Natural killer cell (primary cell): ENCODE measurements at regions of chr5 and their contacts with region 1.

Region 1: DNA sequence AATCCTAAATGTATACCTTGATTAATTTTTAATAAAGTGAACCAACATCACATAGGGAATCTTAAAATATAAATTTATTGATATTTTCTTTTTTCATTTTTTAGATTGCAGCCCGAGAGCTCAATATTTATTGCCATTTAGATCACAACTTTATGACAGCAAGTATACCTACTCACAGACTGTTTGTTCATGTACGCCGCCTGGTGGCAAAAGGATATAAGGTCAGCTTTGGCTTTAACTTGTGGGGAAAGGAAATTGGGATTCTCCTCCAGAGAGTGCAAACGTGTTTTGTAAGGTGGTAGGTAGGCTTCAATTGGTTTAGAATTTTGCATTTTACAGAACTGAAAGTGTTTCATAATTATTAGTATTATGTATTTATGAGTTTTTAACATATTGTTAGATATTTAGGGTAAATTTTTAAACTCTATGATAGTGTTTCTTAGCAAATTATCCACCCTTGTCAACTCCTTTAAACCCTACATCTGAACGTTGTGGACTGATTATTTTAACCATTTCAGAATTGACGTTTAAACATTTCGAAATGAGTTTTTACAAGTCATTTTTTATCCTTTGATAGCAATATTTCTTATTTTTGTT is 17.5 kb upstream of the DHFR start:
- DNase-seq: peak; percentile 51 to 80
- ATAC-seq: peak; percentile 71 to 90 (median 84)
- H3K4me3 ChIP-seq: no peak overlapping the region
- H3K4me3 Mint-ChIP-seq: no peak overlapping the region
- H3K27ac ChIP-seq: no peak overlapping the region
- H3K27ac Mint-ChIP-seq: no peak overlapping the region
- H3K4me1 ChIP-seq: peaks cover 3% of the 10 kb centered on the region
- H3K4me1 Mint-ChIP-seq: no peaks in the 10 kb centered on the region
- H3K27me3 ChIP-seq: no peaks in the 10 kb centered on the region
- H3K27me3 Mint-ChIP-seq: no peaks in the 10 kb centered on the region
- CTCF ChIP-seq: peak; percentile 92

Region 2: DNA sequence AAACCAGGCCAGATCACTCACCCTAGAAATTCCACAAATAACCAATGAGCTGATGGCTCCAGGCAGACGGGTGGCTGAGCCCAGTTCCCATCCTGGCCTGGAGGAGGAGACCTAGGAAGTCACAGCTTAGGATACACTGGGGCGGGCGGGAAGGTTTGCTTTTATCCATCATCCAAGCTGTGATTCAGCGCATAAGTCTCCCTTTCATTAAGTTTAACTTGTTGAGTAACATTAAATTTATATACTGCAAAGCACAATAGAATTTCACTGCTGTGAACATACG is 581.4 kb before region 1 on chr5:
- intact Hi-C with region 1: loop called (anchors 1 kb)
- DNase-seq: no peak
- ATAC-seq: no peak
- H3K4me3 ChIP-seq: no peak overlapping the region
- H3K4me3 Mint-ChIP-seq: no peak overlapping the region
- H3K27ac ChIP-seq: no peak overlapping the region
- H3K27ac Mint-ChIP-seq: no peak overlapping the region
- H3K4me1 ChIP-seq: no peaks in the 10 kb centered on the region
- H3K4me1 Mint-ChIP-seq: no peaks in the 10 kb centered on the region
- H3K27me3 ChIP-seq: no peaks in the 10 kb centered on the region
- H3K27me3 Mint-ChIP-seq: peaks cover 0 to under 1% of the 10 kb centered on the region in 2 donors
- CTCF ChIP-seq: no peak

Region 3: GRCh38 chr5:80481019-80481893 is 191.0 kb before region 1 on chr5:
- intact Hi-C with region 1: loop called (anchors 5 kb)
- DNase-seq: peak in 1 of 2 donors; percentile 58
- ATAC-seq: peak in 2 of 3 donors; percentile 70 to 76
- H3K4me3 ChIP-seq: no peak overlapping the region
- H3K4me3 Mint-ChIP-seq: no peak overlapping the region
- H3K27ac ChIP-seq: no peak overlapping the region
- H3K27ac Mint-ChIP-seq: no peak overlapping the region
- H3K4me1 ChIP-seq: no peaks in the 10 kb centered on the region
- H3K4me1 Mint-ChIP-seq: no peaks in the 10 kb centered on the region
- H3K27me3 ChIP-seq: no peaks in the 10 kb centered on the region
- H3K27me3 Mint-ChIP-seq: peaks cover 0 to under 1% of the 10 kb centered on the region in 2 donors
- CTCF ChIP-seq: peak; percentile 24